ENCODE measurements at regions of chr2 and their contacts with region 1.

Region 1: GRCh38 chr2:96760036-96760985 is at the start of gene CNNM4:
- DNase-seq: peak; percentile 95
- H3K4me3 ChIP-seq: peak within 1 kb of the TSS; percentile 69
- H3K27ac ChIP-seq: peak within 1 kb of the TSS; percentile 37
- H3K4me1 ChIP-seq: peaks cover 45% of the 10 kb centered on the region
- CTCF ChIP-seq: 0 out of 2 replicates have a peak, but pooled peaks have one; percentile 3
- total RNA-seq, gene CNNM4: 5.1 and 5.4 TPM in 2 replicates

Region 2: DNA sequence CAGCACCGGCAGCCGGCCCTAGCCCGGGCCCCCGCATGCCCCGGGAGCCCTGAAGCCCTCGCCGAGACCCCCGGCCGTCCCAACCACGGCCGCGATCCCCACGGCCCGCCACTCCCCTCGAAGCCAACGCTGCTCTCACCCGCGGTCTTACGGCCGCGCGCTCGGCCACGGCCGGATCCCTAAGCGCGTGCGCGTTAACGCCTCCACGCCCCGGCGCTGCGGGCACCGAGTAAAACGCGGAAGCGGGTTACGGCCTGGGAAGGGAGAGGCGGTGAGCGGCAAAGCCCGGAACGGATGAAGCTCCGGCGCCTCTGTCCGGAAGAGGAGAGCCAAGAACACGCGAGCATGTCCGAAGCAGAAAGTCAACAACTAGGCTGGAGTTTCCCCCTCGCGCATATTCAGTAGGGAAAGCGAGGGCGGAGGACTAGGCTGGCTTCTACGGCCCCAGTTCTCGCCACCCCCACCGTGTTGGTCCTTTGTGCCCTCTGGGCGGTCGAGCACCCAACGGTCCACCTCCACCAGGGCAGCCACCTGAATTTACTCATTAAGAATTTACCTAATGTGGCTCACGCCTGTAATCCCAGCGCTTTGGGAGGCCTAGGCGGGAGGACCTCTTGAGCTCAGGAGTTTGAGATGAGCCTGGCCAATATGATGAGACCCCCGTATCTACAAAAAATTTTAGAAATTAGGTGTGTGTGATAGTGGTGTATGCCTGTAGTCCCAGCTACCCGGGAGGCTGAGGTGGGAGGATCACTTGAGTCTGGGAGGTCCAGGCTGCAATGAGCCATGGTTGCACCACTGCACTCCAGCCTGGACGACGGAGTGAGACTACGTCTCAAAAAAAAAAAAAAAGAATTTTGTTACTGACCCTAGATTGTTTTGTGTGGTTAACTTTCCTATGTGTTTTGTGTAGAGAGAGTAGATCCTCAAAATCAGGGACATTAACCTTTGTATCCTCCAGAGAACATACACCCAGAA is 121.9 kb before region 1 on chr2 and contains the start of gene KANSL3:
- CTCF ChIA-PET with region 1: no interaction called
- POLR2A ChIA-PET with region 1: interaction called, 6 read pairs
- intact Hi-C with region 1: loop called (anchors 5 kb)
- DNase-seq: peak; percentile 95
- H3K4me3 ChIP-seq: peak within 1 kb of the TSS; percentile 99
- H3K27ac ChIP-seq: peak within 1 kb of the TSS; percentile 44
- H3K4me1 ChIP-seq: peaks cover 31% of the 10 kb centered on the region
- CTCF ChIP-seq: no peak
- total RNA-seq, gene KANSL3: 40.4 and 46.4 TPM in 2 replicates

Region 3: GRCh38 chr2:96739633-96740428 is 20.5 kb before region 1 on chr2 and contains the start of gene LMAN2L:
- CTCF ChIA-PET with region 1: no interaction called
- POLR2A ChIA-PET with region 1: interaction called, 12 read pairs
- intact Hi-C with region 1: no loop called
- DNase-seq: peak; percentile 98
- H3K4me3 ChIP-seq: peak within 1 kb of the TSS; percentile 83
- H3K27ac ChIP-seq: peak within 1 kb of the TSS; percentile 70
- H3K4me1 ChIP-seq: peaks cover 29% of the 10 kb centered on the region
- CTCF ChIP-seq: no peak
- total RNA-seq, gene LMAN2L: 12.9 and 15.5 TPM in 2 replicates

Region 4: DNA sequence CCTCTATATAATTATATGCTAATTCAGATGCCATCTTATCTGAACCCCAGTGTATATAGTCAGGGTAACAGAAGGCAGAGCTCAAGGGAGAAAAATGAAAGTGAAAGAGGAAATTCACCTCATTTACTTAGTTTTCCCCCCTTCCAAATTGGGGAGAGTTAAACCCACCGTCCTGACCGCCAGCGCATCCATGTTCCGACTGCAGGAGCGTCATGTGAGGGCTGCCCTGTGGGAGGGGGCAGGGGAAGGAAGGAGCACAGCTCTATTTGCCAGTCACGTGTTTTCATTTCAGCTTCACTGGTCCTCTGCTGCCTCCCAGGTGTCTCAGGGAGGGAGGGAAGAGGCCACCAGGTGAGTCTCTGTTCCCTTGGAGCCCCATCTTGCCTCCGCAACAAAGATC is 13.6 kb after region 1 on chr2:
- CTCF ChIA-PET with region 1: interaction called, 20 read pairs
- POLR2A ChIA-PET with region 1: interaction called, 44 read pairs
- intact Hi-C with region 1: no loop called
- DNase-seq: peak; percentile 79
- H3K4me3 ChIP-seq: peak overlapping the region; percentile 65
- H3K27ac ChIP-seq: peak overlapping the region; percentile 58
- H3K4me1 ChIP-seq: peaks cover 65% of the 10 kb centered on the region
- CTCF ChIP-seq: no peak

Region 5: GRCh38 chr2:96801005-96801785 is 40.9 kb after region 1 on chr2:
- CTCF ChIA-PET with region 1: interaction called, 5 read pairs
- POLR2A ChIA-PET with region 1: no interaction called
- intact Hi-C with region 1: loop called (anchors 1 kb)
- DNase-seq: peak; percentile 80
- H3K4me3 ChIP-seq: no peak overlapping the region
- H3K27ac ChIP-seq: no peak overlapping the region
- H3K4me1 ChIP-seq: peaks cover 18% of the 10 kb centered on the region
- CTCF ChIP-seq: peak; percentile 89

Region 6: GRCh38 chr2:96816128-96816835 is 56.0 kb after region 1 on chr2 and contains the start of gene CNNM3:
- CTCF ChIA-PET with region 1: no interaction called
- POLR2A ChIA-PET with region 1: interaction called, 3 read pairs
- intact Hi-C with region 1: loop called (anchors 5 kb)
- DNase-seq: peak; percentile 94
- H3K4me3 ChIP-seq: peak within 1 kb of the TSS; percentile 90
- H3K27ac ChIP-seq: peak within 1 kb of the TSS; percentile 58
- H3K4me1 ChIP-seq: peaks cover 46% of the 10 kb centered on the region
- CTCF ChIP-seq: peak; percentile 61
- total RNA-seq, gene CNNM3: 9.1 and 13.5 TPM in 2 replicates

Region 7: GRCh38 chr2:96856776-96857673 is 96.7 kb after region 1 on chr2:
- CTCF ChIA-PET with region 1: interaction called, 3 read pairs
- POLR2A ChIA-PET with region 1: interaction called, 5 read pairs
- intact Hi-C with region 1: loop called (anchors 5 kb)
- DNase-seq: peak; percentile 81
- H3K4me3 ChIP-seq: peak overlapping the region; percentile 77
- H3K27ac ChIP-seq: peak overlapping the region; percentile 62
- H3K4me1 ChIP-seq: peaks cover 14% of the 10 kb centered on the region
- CTCF ChIP-seq: no peak